Activated naive CD4-positive, alpha-beta T cell treated with anti-CD3 and anti-CD28 coated beads for 36 hours (primary cell): ENCODE measurements at regions of chrX and their contacts with region 1.

Region 1: GRCh38 chrX:45849253-45849862 is 648.7 kb upstream of the DIPK2B start:
- DNase-seq: peak; percentile 42
- H3K4me3 Mint-ChIP-seq: peak overlapping the region; percentile 97
- H3K27ac Mint-ChIP-seq: peak overlapping the region; percentile 95
- H3K4me1 Mint-ChIP-seq: peaks cover 37% of the 10 kb centered on the region
- H3K27me3 Mint-ChIP-seq: no peaks in the 10 kb centered on the region

Region 2: GRCh38 chrX:45515262-45516215 is 333.8 kb before region 1 on chrX:
- CTCF ChIA-PET with region 1: no interaction called
- intact Hi-C with region 1: loop called (anchors 2 kb)
- DNase-seq: peak; percentile 45
- H3K4me3 Mint-ChIP-seq: no peak overlapping the region
- H3K27ac Mint-ChIP-seq: peak overlapping the region; percentile 18
- H3K4me1 Mint-ChIP-seq: peaks cover 17% of the 10 kb centered on the region
- H3K27me3 Mint-ChIP-seq: peaks cover 4% of the 10 kb centered on the region

Region 3: GRCh38 chrX:45710081-45710801 is 139.1 kb before region 1 on chrX:
- CTCF ChIA-PET with region 1: no interaction called
- intact Hi-C with region 1: loop called (anchors 2 kb)
- DNase-seq: peak; percentile 71
- H3K4me3 Mint-ChIP-seq: no peak overlapping the region
- H3K27ac Mint-ChIP-seq: peak overlapping the region; percentile 69
- H3K4me1 Mint-ChIP-seq: peaks cover 42% of the 10 kb centered on the region
- H3K27me3 Mint-ChIP-seq: no peaks in the 10 kb centered on the region

Region 4: GRCh38 chrX:45801554-45801953 is 47.8 kb before region 1 on chrX:
- CTCF ChIA-PET with region 1: interaction called, 3 read pairs
- intact Hi-C with region 1: loop called (anchors 1 kb)
- DNase-seq: no peak
- H3K4me3 Mint-ChIP-seq: no peak overlapping the region
- H3K27ac Mint-ChIP-seq: peak overlapping the region; percentile 70
- H3K4me1 Mint-ChIP-seq: peaks cover 75% of the 10 kb centered on the region
- H3K27me3 Mint-ChIP-seq: no peaks in the 10 kb centered on the region